ENCODE measurements at regions of chr10 and their contacts with region 1.

Region 1: DNA sequence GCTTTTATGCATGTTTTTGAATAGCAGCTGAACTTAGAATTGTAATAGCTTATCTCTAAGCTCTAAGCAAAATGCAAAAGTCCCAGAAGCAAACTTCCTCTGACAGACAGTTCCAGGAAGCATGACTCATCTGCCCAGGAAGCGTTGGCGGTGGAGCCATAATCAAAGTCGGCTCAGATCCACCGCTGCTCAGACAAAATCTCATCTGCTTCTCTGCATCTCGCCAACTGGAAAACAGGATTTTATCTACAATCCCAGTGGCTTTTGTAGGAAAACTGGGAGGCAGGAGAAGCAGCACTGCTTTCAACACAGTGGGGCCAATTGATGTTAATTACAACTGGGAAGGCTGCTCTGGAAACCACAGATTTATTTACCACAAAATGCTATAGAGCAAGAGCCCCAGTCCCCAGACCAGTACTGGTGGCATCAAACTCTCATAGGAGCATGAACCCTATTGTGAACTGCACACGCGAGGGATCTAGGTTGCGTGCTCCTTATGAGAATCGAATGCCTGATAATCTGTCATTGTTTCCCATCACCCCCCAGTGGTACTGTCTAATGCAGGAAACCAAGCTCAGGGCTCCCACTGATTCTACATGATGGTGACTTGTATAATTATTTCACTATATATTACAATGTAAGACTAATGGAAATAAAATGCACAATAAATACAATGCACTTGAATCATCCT is 99.9 kb downstream of the CUBN start:
- DNase-seq: peak; percentile 93
- ATAC-seq: peak; percentile 27
- H3K4me3 Mint-ChIP-seq: peak overlapping the region; percentile 61
- H3K27ac Mint-ChIP-seq: peak overlapping the region; percentile 90
- H3K4me1 Mint-ChIP-seq: peaks cover 76% of the 10 kb centered on the region
- H3K27me3 Mint-ChIP-seq: no peaks in the 10 kb centered on the region

Region 2: DNA sequence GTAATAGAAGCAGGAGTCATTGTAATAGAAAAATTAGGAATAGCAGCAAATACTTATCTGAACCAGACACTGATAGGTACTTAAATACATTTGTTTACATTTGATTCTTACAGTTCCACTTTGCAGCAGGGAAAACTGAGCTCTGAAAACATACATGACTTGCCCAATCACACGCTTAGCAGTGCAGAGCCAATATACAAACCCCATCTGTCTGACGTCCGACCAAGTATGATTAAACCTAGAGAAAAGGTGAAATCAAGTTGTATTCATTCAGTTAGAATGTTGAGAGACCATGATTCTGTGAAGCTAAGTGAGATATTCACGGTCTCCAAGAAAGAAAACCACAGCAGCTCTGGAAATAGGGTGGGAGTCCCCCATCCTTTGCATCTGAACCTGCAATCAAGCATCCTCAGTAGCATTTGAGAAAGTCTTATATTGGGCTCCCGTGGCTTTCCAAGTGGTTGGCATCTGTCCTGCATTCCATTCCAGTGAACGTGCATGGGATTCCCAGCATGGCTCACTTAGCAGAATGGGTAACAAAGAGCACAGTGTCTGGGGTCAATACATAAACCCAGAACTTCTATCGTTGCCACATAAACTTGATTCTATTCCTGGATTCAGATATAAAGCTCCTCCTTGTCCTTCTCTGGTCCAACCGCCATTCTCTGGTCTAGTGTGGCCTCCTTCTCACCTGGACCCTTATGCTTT is 63.8 kb before region 1 on chr10:
- CTCF ChIA-PET with region 1: no interaction called
- POLR2A ChIA-PET with region 1: no interaction called
- intact Hi-C with region 1: loop called (anchors 1 to 2 kb)
- DNase-seq: no peak
- ATAC-seq: no peak
- H3K4me3 Mint-ChIP-seq: no peak overlapping the region
- H3K27ac Mint-ChIP-seq: no peak overlapping the region
- H3K4me1 Mint-ChIP-seq: peaks cover 24% of the 10 kb centered on the region
- H3K27me3 Mint-ChIP-seq: no peaks in the 10 kb centered on the region

Region 3: DNA sequence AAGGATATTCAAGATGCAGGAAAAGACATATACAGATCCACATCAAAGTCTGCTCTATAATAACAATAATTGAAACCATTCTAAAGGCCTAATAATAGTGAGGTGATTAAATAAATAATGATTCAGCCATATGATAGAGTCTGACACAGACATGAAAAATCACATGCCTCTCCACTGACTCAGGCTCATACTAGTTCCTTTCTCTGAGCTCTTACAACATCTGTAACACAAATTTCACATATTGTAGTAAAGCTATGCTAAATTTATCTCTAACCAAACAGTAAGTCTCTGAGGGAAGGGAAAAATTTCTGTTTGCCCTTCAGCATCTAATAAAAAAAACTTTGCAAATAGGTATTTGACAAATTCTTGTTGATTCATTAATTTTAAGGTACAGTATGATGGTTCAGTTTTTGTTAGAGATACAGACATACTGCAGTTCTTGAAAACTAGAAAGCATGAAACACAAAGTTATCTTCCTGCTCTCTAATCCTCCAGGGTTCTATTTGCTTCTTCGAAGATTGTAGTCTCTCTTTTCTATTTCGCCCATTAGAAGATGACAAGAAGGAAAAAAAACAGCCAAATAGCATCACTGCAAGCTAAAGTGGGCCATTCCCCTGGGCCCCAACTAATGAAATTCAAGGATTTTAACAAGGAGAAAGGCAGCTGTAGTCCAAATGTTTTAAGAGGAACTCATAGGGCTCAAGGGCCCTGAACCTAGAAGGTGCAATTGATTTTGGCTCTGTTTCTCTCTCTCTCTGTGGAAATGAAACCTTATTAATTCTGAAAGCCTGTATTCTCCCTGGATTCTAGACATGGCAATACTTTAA is 46.0 kb after region 1 on chr10:
- CTCF ChIA-PET with region 1: no interaction called
- POLR2A ChIA-PET with region 1: no interaction called
- intact Hi-C with region 1: loop called in 1 of 2 experiments (anchors 2 kb)
- DNase-seq: no peak
- ATAC-seq: no peak
- H3K4me3 Mint-ChIP-seq: no peak overlapping the region
- H3K27ac Mint-ChIP-seq: no peak overlapping the region
- H3K4me1 Mint-ChIP-seq: peaks cover 40% of the 10 kb centered on the region
- H3K27me3 Mint-ChIP-seq: no peaks in the 10 kb centered on the region

Region 4: GRCh38 chr10:17122726-17123661 is 93.3 kb after region 1 on chr10:
- CTCF ChIA-PET with region 1: no interaction called
- POLR2A ChIA-PET with region 1: no interaction called
- intact Hi-C with region 1: no loop called
- DNase-seq: no peak
- ATAC-seq: no peak
- H3K4me3 Mint-ChIP-seq: no peak overlapping the region
- H3K27ac Mint-ChIP-seq: no peak overlapping the region
- H3K4me1 Mint-ChIP-seq: no peaks in the 10 kb centered on the region
- H3K27me3 Mint-ChIP-seq: no peaks in the 10 kb centered on the region

Region 5: GRCh38 chr10:17144757-17145156 is 115.0 kb after region 1 on chr10:
- CTCF ChIA-PET with region 1: no interaction called
- POLR2A ChIA-PET with region 1: no interaction called
- intact Hi-C with region 1: loop called (anchors 1 kb)
- DNase-seq: peak; percentile 80
- ATAC-seq: peak; percentile 96
- H3K4me3 Mint-ChIP-seq: no peak overlapping the region
- H3K27ac Mint-ChIP-seq: peak overlapping the region; percentile 51
- H3K4me1 Mint-ChIP-seq: peaks cover 31% of the 10 kb centered on the region
- H3K27me3 Mint-ChIP-seq: no peaks in the 10 kb centered on the region

Region 6: DNA sequence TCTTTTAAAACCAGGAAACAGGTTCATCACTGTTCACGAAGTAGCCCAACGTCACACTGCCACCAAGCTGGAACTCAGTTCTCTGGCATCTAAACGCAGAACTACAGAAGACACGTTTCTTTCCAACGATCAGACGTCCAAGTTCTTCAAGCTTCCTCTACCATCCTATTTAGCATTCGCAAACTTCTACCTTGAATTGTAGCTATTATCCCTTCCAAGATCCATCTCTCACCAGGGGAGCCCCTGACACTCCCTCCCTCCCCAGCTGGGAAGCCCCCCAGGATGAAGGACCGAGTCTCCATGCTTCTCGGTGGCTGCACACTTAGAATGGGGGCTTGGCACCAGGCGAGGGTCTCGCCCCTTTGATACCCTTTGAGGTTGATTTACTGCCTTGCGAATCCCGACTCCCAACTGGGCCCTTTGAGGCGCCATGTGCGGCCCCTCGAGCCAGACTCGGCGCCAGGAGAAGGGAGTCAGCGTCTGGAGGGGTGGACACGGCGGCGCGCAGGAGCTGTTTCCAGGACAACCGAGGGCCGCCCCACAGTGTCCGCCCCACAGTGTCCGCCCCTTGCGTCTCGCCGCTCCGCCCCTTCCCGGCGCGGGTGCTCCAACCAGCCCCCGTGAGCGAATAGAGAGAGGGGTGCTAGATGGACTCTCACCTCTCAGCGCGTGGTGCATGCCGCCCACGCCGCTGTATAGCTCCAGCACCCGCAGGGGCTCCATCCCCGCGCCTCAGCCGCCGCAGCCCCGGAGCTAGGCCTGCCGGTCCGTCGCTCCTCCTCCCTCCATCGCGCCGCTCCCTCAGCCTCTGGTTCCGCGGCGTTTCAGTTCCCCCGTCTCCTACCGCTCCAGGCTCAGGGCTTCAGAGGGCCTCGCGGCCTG is 171.4 kb after region 1 on chr10 and contains the start of gene TRDMT1:
- CTCF ChIA-PET with region 1: no interaction called
- POLR2A ChIA-PET with region 1: interaction called, 9 read pairs
- intact Hi-C with region 1: loop called (anchors 1 kb)
- DNase-seq: peak; percentile 85
- ATAC-seq: peak; percentile 91
- H3K4me3 Mint-ChIP-seq: peak within 1 kb of the TSS; percentile 86
- H3K27ac Mint-ChIP-seq: peak within 1 kb of the TSS; percentile 89
- H3K4me1 Mint-ChIP-seq: peaks cover 46% of the 10 kb centered on the region
- H3K27me3 Mint-ChIP-seq: no peaks in the 10 kb centered on the region
- total RNA-seq, gene TRDMT1: 6.6 to 11.6 TPM

Region 7: GRCh38 chr10:17216217-17216900 is 186.6 kb after region 1 on chr10:
- CTCF ChIA-PET with region 1: no interaction called
- POLR2A ChIA-PET with region 1: no interaction called
- intact Hi-C with region 1: loop called (anchors 1 kb)
- DNase-seq: peak; percentile 48
- ATAC-seq: peak; percentile 96
- H3K4me3 Mint-ChIP-seq: no peak overlapping the region
- H3K27ac Mint-ChIP-seq: peak overlapping the region; percentile 85
- H3K4me1 Mint-ChIP-seq: peaks cover 39% of the 10 kb centered on the region
- H3K27me3 Mint-ChIP-seq: no peaks in the 10 kb centered on the region